GM12878 (cell line): ENCODE measurements at regions of chr7 and their contacts with region 1.

Region 1: DNA sequence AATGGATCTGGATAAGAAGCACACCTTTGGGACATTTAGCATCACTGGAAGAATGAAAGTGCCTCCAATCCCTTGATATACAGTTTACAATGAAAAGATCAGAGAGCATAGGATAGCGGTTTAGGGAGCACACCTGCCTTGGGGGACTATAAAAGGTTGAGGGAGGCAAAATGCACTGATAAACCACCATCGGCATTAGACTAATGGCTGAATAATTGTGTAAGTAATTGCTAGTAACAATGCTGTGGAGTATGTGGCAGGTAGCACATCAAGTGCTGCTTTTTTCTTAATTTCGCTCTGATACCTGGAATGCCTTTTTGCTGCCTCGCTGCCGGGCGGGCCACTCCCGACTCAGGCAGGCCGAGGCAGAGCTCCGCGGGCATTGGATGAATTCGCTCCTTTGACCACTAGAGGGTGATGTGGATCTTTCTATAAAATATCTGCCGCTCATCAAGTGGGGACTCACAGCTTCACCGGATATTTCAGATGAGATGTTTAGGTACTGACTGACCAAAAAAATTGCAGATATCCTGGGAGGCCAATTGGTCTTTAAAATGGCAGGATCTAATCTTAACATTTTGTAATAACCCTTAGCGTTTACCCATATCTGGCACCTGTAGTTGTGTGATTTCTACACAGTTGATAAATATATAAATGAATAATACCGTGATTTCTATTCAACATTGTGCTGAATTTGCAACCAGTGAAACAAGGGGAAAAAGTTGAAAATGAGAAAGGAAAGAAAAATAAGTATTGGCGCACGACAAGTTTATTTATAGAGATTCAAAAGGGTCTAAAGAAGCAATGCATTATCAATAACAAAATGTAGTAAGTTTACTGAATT is 116.8 kb upstream of the PRSS1 start:
- DNase-seq: peak; percentile 32
- ATAC-seq: peak; percentile 100
- H3K4me3 ChIP-seq: no peak overlapping the region
- H3K27ac ChIP-seq: no peak overlapping the region
- H3K4me1 ChIP-seq: no peaks in the 10 kb centered on the region
- H3K27me3 ChIP-seq: peaks cover 0 to 1% of the 10 kb centered on the region in 2 experiments; a peak in 1 of 4 replicates
- CTCF ChIP-seq: peak; percentile 73 to 86 (median 82)
- EP300 ChIP-seq: no peak
- POLR2A ChIP-seq: no peak
- RAD21 ChIP-seq: peak; percentile 81

Region 2: DNA sequence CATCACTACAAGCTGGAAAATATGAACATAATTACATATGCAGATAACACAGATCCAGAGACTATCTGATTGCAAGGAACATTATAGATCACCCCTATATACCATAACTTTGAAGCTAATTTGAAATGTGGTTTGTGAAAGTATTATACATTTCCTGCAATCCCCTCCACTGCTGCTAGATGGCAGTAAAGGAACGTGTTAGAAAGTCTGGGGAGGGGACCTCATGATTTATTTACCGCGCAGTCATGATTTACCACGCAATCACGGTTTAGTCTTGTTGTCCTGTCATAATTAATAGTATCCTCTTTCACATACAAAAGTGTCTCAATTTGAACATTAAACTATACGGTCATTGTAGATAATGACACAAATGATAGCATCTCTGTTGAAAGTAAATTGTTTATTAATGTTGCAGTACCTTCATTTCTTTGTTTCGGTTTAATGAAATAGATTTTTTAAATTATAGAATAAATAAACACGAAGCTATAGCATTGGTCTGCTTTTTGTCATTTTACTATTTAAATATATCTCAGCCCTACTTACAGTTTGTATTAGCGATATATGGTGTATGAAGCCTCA is 28.6 kb before region 1 on chr7:
- CTCF ChIA-PET with region 1: interaction called, 23 read pairs
- POLR2A ChIA-PET with region 1: no interaction called
- RAD21 ChIA-PET with region 1: interaction called, 9 read pairs
- SMC1A ChIA-PET with region 1: interaction called, 7 read pairs
- in situ Hi-C with region 1: no loop called
- intact Hi-C with region 1: no loop called
- DNase-seq: no peak
- ATAC-seq: peak; percentile 74
- H3K4me3 ChIP-seq: no peak overlapping the region
- H3K27ac ChIP-seq: no peak overlapping the region
- H3K4me1 ChIP-seq: no peaks in the 10 kb centered on the region
- H3K27me3 ChIP-seq: no peaks in the 10 kb centered on the region
- CTCF ChIP-seq: peak; percentile 74 to 81 (median 81)
- EP300 ChIP-seq: no peak
- POLR2A ChIP-seq: no peak
- RAD21 ChIP-seq: peak; percentile 82

Region 3: GRCh38 chr7:142669074-142669654 is 36.7 kb after region 1 on chr7:
- CTCF ChIA-PET with region 1: interaction called, 11 read pairs
- POLR2A ChIA-PET with region 1: no interaction called
- RAD21 ChIA-PET with region 1: interaction called, 3 read pairs
- SMC1A ChIA-PET with region 1: interaction called, 8 read pairs
- in situ Hi-C with region 1: no loop called
- intact Hi-C with region 1: no loop called
- DNase-seq: no peak
- ATAC-seq: peak; percentile 78
- H3K4me3 ChIP-seq: no peak overlapping the region
- H3K27ac ChIP-seq: no peak overlapping the region
- H3K4me1 ChIP-seq: peaks cover 4% of the 10 kb centered on the region; the same call in 1 of the 2 replicates
- H3K27me3 ChIP-seq: no peaks in the 10 kb centered on the region
- CTCF ChIP-seq: peak; percentile 35 to 51 (median 41); a peak in 4 of 6 replicates
- EP300 ChIP-seq: no peak
- POLR2A ChIP-seq: no peak
- RAD21 ChIP-seq: peak; percentile 65

Region 4: GRCh38 chr7:142817506-142817905 is 185.0 kb after region 1 on chr7:
- CTCF ChIA-PET with region 1: interaction called, 185 read pairs
- POLR2A ChIA-PET with region 1: no interaction called
- RAD21 ChIA-PET with region 1: interaction called, 75 read pairs
- SMC1A ChIA-PET with region 1: interaction called, 68 read pairs
- in situ Hi-C with region 1: loop called (anchors 5 kb)
- intact Hi-C with region 1: no loop called
- DNase-seq: no peak
- ATAC-seq: no peak
- H3K4me3 ChIP-seq: no peak overlapping the region
- H3K27ac ChIP-seq: no peak overlapping the region
- H3K4me1 ChIP-seq: no peaks in the 10 kb centered on the region
- H3K27me3 ChIP-seq: no peaks in the 10 kb centered on the region
- CTCF ChIP-seq: no peak
- EP300 ChIP-seq: no peak
- POLR2A ChIP-seq: no peak
- RAD21 ChIP-seq: no peak

Region 5: DNA sequence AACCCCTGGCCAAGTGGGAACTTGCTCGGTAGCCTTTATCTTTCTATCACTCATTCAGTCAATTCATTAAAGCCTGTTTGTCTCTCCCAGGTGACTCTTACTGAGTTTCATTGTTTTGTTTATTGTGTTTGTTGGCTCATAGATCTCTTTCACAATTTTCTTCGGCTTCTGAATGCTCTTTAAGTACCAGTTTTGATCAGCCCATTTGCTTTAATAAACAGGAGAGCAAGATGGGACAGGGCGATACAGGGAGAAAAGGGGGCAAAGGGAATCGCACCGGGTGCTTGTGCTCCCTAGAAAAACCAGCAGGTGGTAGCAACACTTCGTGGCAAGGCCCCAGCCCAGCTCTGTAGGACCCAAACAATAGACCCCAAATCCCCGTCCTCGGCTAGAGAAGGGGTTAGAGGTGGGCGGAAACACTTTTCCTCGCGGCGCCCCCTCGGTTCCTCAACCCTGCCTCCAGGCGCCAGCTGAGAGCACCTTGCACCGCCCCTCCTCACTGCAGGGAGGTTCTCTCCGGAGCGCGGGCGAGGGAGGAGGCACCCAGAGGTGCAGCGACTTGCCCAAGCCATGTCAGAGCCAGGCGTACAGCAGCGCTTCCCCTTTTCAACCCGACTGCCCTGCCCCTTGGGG is 221.3 kb after region 1 on chr7:
- CTCF ChIA-PET with region 1: interaction called, 3 read pairs
- POLR2A ChIA-PET with region 1: no interaction called
- RAD21 ChIA-PET with region 1: interaction called, 4 read pairs
- SMC1A ChIA-PET with region 1: interaction called, 5 read pairs
- in situ Hi-C with region 1: no loop called
- intact Hi-C with region 1: loop called (anchors 1 kb)
- DNase-seq: no peak
- ATAC-seq: peak; percentile 92
- H3K4me3 ChIP-seq: peak overlapping the region; percentile 96
- H3K27ac ChIP-seq: no peak overlapping the region
- H3K4me1 ChIP-seq: no peaks in the 10 kb centered on the region
- H3K27me3 ChIP-seq: peaks cover 0 to 8% of the 10 kb centered on the region in 2 experiments
- CTCF ChIP-seq: peak; percentile 75 to 83 (median 81)
- EP300 ChIP-seq: no peak
- POLR2A ChIP-seq: no peak
- RAD21 ChIP-seq: peak; percentile 71

Region 6: GRCh38 chr7:142866361-142867058 is 234.0 kb after region 1 on chr7:
- CTCF ChIA-PET with region 1: interaction called, 4 read pairs
- POLR2A ChIA-PET with region 1: no interaction called
- RAD21 ChIA-PET with region 1: interaction called, 9 read pairs
- SMC1A ChIA-PET with region 1: no interaction called
- in situ Hi-C with region 1: no loop called
- intact Hi-C with region 1: loop called (anchors 1 kb)
- DNase-seq: no peak
- ATAC-seq: peak; percentile 68
- H3K4me3 ChIP-seq: no peak overlapping the region
- H3K27ac ChIP-seq: no peak overlapping the region
- H3K4me1 ChIP-seq: no peaks in the 10 kb centered on the region
- H3K27me3 ChIP-seq: no peaks in the 10 kb centered on the region
- CTCF ChIP-seq: peak; percentile 43 to 64 (median 60); a peak in 5 of 6 replicates
- EP300 ChIP-seq: no peak
- POLR2A ChIP-seq: no peak
- RAD21 ChIP-seq: peak; percentile 44; the same call in 1 of the 2 replicates